GM12878 (cell line): ENCODE measurements at regions of chr10 and their contacts with region 1.

Region 1: DNA sequence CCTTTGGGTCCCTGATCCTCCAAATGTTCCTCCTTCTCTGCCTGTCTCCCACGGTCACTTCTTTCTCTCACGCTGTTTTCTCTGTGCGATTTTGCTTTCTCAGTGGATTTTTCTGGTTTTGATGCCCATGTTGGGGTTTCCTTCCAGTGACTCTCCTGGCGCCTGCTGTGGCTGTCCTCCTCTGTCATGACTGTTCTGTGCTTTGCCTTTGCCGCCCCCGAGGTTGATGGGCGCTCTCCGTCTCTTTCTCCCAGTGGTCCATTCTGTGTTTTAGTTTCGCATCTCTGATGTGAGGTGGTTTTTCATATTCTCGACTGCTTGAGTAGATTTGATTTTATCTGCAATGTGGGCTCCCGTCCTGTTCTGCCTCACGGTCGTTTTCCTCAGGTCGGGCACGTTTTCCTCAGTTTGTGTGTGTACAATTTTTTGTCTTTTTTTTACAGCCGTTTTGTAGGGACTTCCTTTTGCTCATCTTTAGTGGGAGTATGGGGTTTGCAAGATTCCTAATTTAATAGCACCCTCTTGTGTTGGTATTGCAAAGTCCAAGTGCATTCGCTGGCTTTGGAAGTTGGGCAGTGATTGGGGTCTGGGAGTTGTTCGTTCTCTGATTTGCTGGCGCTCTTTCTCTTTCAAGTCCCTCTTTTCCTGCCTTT is 100.0 kb downstream of the INPP5A start:
- DNase-seq: peak; percentile 43
- ATAC-seq: peak; percentile 89
- H3K4me3 ChIP-seq: no peak overlapping the region
- H3K27ac ChIP-seq: no peak overlapping the region
- H3K4me1 ChIP-seq: no peaks in the 10 kb centered on the region
- H3K27me3 ChIP-seq: no peaks in the 10 kb centered on the region
- CTCF ChIP-seq: peak; percentile 58 to 86 (median 67); a peak in 5 of 6 replicates
- EP300 ChIP-seq: no peak
- POLR2A ChIP-seq: no peak
- RAD21 ChIP-seq: peak; percentile 97

Region 2: GRCh38 chr10:132223156-132223590 is 414.4 kb before region 1 on chr10:
- CTCF ChIA-PET with region 1: no interaction called
- POLR2A ChIA-PET with region 1: no interaction called
- RAD21 ChIA-PET with region 1: no interaction called
- SMC1A ChIA-PET with region 1: no interaction called
- in situ Hi-C with region 1: loop called (anchors 10 kb)
- intact Hi-C with region 1: loop called (anchors 1 kb)
- DNase-seq: peak; percentile 8
- ATAC-seq: peak; percentile 99
- H3K4me3 ChIP-seq: no peak overlapping the region
- H3K27ac ChIP-seq: no peak overlapping the region
- H3K4me1 ChIP-seq: no peaks in the 10 kb centered on the region
- H3K27me3 ChIP-seq: no peaks in the 10 kb centered on the region
- CTCF ChIP-seq: peak; percentile 79 to 96 (median 91); a peak in 5 of 6 replicates
- EP300 ChIP-seq: no peak
- POLR2A ChIP-seq: no peak
- RAD21 ChIP-seq: peak; percentile 75

Region 3: GRCh38 chr10:132458593-132459300 is 178.9 kb before region 1 on chr10:
- CTCF ChIA-PET with region 1: interaction called, 18 read pairs
- POLR2A ChIA-PET with region 1: no interaction called
- RAD21 ChIA-PET with region 1: interaction called, 12 read pairs
- SMC1A ChIA-PET with region 1: interaction called, 33 read pairs
- in situ Hi-C with region 1: loop called (anchors 5 kb)
- intact Hi-C with region 1: loop called (anchors 1 kb)
- DNase-seq: no peak
- ATAC-seq: peak; percentile 90
- H3K4me3 ChIP-seq: no peak overlapping the region
- H3K27ac ChIP-seq: no peak overlapping the region
- H3K4me1 ChIP-seq: no peaks in the 10 kb centered on the region
- H3K27me3 ChIP-seq: no peaks in the 10 kb centered on the region; a peak in 2 of 4 replicates
- CTCF ChIP-seq: peak; percentile 82 to 95 (median 90)
- EP300 ChIP-seq: no peak
- POLR2A ChIP-seq: no peak
- RAD21 ChIP-seq: peak; percentile 87

Region 4: DNA sequence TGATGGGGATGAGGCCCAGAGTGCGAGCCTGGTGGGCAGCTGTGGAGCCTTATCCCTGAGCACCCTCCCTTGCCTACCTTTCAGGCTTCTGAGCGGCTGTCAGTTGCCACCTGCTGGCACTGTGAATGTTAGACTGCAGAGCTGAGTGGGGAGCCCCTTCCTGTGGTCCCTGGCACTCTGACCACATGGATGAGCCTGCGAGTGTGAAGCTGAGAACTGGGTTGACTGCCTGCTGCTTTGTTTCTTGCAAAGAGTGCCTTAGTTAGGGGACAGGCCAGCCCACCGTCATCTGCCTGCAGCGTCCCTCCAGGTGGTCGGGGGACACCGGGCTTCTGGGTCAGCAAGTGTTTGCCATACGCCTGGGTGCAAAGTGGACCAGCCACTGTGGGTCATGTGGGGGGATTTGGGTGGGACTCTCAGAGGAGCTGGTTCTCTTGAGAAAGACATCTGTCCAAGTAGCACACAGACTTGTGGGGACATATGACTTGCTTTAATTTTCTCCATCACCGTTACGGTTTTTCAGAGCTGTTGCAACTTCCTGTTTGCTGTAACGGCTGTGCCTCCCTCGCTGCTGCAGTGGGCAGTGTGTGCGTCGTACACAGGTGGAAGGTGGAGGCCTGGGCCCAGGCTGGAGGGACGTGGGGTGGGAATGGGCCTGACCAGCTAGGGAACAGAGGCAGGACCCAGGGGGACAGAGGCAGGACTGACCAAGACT is 86.4 kb before region 1 on chr10:
- CTCF ChIA-PET with region 1: interaction called, 10 read pairs
- POLR2A ChIA-PET with region 1: no interaction called
- RAD21 ChIA-PET with region 1: no interaction called
- SMC1A ChIA-PET with region 1: no interaction called
- in situ Hi-C with region 1: no loop called
- intact Hi-C with region 1: no loop called
- DNase-seq: no peak
- ATAC-seq: peak; percentile 77
- H3K4me3 ChIP-seq: no peak overlapping the region
- H3K27ac ChIP-seq: no peak overlapping the region; the same call in 1 of the 2 replicates
- H3K4me1 ChIP-seq: peaks cover 30% of the 10 kb centered on the region
- H3K27me3 ChIP-seq: no peaks in the 10 kb centered on the region; a peak in 1 of 4 replicates
- CTCF ChIP-seq: peak in 1 of 3 experiments; percentile 8; a peak in 2 of 6 replicates
- EP300 ChIP-seq: no peak
- POLR2A ChIP-seq: peak; percentile 70
- RAD21 ChIP-seq: peak; percentile 23; the same call in 1 of the 2 replicates

Region 5: GRCh38 chr10:132588301-132589013 is 49.1 kb before region 1 on chr10:
- CTCF ChIA-PET with region 1: interaction called, 4 read pairs
- POLR2A ChIA-PET with region 1: no interaction called
- RAD21 ChIA-PET with region 1: interaction called, 4 read pairs
- SMC1A ChIA-PET with region 1: interaction called, 13 read pairs
- in situ Hi-C with region 1: no loop called
- intact Hi-C with region 1: no loop called
- DNase-seq: no peak
- ATAC-seq: peak; percentile 73
- H3K4me3 ChIP-seq: peak overlapping the region; percentile 28; the same call in 1 of the 2 replicates
- H3K27ac ChIP-seq: peak overlapping the region; percentile 9
- H3K4me1 ChIP-seq: peaks cover 19% of the 10 kb centered on the region
- H3K27me3 ChIP-seq: no peaks in the 10 kb centered on the region
- CTCF ChIP-seq: no peak
- EP300 ChIP-seq: no peak
- POLR2A ChIP-seq: no peak
- RAD21 ChIP-seq: no peak